ENCODE measurements at regions of chrX and their contacts with region 1.

Region 1: DNA sequence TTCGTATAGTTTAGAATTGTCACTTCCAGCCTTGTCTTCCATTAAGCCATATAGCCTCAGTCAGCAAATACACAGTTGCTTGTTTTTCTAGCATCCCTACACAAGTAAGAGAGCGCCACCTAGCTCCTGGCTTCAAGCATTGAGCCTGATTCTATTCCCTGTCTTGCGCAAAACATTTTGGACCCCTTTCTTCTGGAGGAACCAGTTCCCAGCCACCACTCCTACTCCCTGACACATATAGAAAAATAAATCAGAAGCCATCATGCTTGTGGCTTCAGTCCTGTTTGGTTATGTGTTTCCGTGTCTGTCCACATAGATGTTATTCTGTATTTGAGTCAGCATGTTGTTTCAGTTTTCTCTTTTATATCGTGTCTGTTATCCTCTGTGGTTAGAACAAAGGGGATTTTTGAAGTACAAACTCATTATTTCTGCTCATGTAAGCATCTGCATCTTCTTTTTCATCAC is 59.9 kb downstream of the GK start:
- DNase-seq: peak in 1 of 2 donors; percentile 34
- H3K4me3 ChIP-seq: no peak overlapping the region
- CTCF ChIP-seq: no peak
- POLR2A ChIP-seq: no peak

Region 2: GRCh38 chrX:30111431-30111830 is 601.7 kb before region 1 on chrX:
- intact Hi-C with region 1: no loop called
- DNase-seq: no peak
- H3K4me3 ChIP-seq: no peak overlapping the region
- CTCF ChIP-seq: no peak
- POLR2A ChIP-seq: no peak

Region 3: GRCh38 chrX:30568136-30568535 is 145.0 kb before region 1 on chrX:
- intact Hi-C with region 1: loop called (anchors 10 kb)
- DNase-seq: no peak
- H3K4me3 ChIP-seq: no peak overlapping the region
- CTCF ChIP-seq: no peak
- POLR2A ChIP-seq: no peak